ENCODE measurements at regions of chr3 and their contacts with region 1.

Region 1: GRCh38 chr3:66836363-66837152 is 161.5 kb upstream of the KBTBD8 start:
- DNase-seq: no peak
- H3K4me3 ChIP-seq: no peak overlapping the region
- H3K27ac ChIP-seq: no peak overlapping the region
- H3K4me1 ChIP-seq: peaks cover 0 to 8% (median 0%) of the 10 kb centered on the region in 4 donors
- H3K27me3 ChIP-seq: no peaks in the 10 kb centered on the region
- CTCF ChIP-seq: peak; percentile 12 to 29 (median 18)
- EP300 ChIP-seq: no peak
- POLR2A ChIP-seq: no peak

Region 2: GRCh38 chr3:66253790-66254620 is 582.6 kb before region 1 on chr3:
- intact Hi-C with region 1: loop called (anchors 2 kb)
- DNase-seq: no peak
- H3K4me3 ChIP-seq: no peak overlapping the region
- H3K27ac ChIP-seq: no peak overlapping the region
- H3K4me1 ChIP-seq: no peaks in the 10 kb centered on the region
- H3K27me3 ChIP-seq: no peaks in the 10 kb centered on the region
- CTCF ChIP-seq: peak; percentile 52 to 82 (median 80)
- EP300 ChIP-seq: no peak
- POLR2A ChIP-seq: no peak

Region 3: GRCh38 chr3:66527246-66527645 is 309.3 kb before region 1 on chr3:
- intact Hi-C with region 1: no loop called
- DNase-seq: no peak
- H3K4me3 ChIP-seq: no peak overlapping the region
- H3K27ac ChIP-seq: no peak overlapping the region
- H3K4me1 ChIP-seq: no peaks in the 10 kb centered on the region
- H3K27me3 ChIP-seq: no peaks in the 10 kb centered on the region
- CTCF ChIP-seq: no peak
- EP300 ChIP-seq: no peak
- POLR2A ChIP-seq: no peak

Region 4: DNA sequence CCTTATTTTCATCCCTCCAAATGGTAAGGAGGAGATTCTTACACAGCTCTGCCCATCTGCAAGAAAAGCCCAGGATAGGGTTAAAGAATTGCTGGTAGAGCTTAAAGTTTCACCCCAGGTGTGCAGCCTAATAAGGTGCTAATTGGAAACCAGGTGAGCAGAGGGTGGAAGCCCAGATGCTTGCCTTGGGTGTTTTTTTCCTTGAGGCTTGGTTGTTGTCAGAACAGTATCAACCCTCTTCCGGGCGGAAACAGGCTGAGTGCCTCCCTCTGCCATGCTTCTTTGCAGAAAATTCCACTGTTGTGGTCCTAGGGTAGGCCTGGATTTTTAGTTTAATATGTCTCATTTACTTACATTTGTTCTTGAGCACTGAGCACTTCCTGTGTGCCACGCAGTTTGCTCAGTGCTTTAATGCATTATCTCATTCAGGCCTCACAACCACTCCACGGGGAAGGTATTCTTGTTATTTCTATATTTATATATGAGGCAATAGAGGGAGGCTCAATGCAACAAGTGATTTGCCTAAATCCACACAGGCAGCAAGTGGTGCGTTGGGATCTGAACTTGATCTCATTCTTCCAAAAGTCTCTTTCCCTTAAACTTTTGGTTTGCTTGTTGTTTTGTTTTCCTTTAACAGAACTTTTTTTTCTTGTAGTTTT is 220.8 kb before region 1 on chr3:
- intact Hi-C with region 1: no loop called
- DNase-seq: no peak
- H3K4me3 ChIP-seq: no peak overlapping the region
- H3K27ac ChIP-seq: peak overlapping the region in 3 of 4 donors; percentile 53 to 74 (median 72)
- H3K4me1 ChIP-seq: peaks cover 0 to 36% (median 30%) of the 10 kb centered on the region in 4 donors
- H3K27me3 ChIP-seq: no peaks in the 10 kb centered on the region
- CTCF ChIP-seq: no peak
- EP300 ChIP-seq: no peak
- POLR2A ChIP-seq: no peak